ENCODE measurements at regions of chr1 and their contacts with region 1.

Region 1: GRCh38 chr1:18805925-18806849 is 53.3 kb downstream of the TAS1R2 start:
- DNase-seq: no peak
- H3K4me3 Mint-ChIP-seq: no peak overlapping the region
- H3K27ac Mint-ChIP-seq: no peak overlapping the region
- H3K4me1 Mint-ChIP-seq: no peaks in the 10 kb centered on the region
- H3K27me3 Mint-ChIP-seq: peaks cover 19% of the 10 kb centered on the region

Region 2: DNA sequence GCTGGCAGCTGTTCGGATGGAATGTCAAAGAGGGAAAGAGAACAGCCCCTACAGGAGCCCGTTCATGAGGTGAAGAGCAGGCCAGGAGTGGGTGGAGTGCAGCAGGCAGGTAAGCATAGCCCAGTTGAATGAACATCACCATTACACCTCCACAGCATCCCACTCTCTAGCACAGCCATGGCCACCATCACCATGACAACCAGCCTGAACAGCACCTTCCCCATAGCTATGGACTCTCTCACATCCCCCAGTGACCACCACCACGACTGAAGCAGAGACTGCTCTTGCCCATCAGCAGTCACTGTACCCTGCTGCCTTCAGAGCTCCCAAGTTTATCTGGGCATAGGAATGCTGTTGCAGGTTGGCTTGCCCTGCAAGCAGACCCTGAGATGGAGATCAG is 20.2 kb after region 1 on chr1:
- CTCF ChIA-PET with region 1: no interaction called
- POLR2A ChIA-PET with region 1: no interaction called
- intact Hi-C with region 1: no loop called
- DNase-seq: no peak
- H3K4me3 Mint-ChIP-seq: no peak overlapping the region
- H3K27ac Mint-ChIP-seq: no peak overlapping the region
- H3K4me1 Mint-ChIP-seq: no peaks in the 10 kb centered on the region
- H3K27me3 Mint-ChIP-seq: peaks cover 15% of the 10 kb centered on the region

Region 3: DNA sequence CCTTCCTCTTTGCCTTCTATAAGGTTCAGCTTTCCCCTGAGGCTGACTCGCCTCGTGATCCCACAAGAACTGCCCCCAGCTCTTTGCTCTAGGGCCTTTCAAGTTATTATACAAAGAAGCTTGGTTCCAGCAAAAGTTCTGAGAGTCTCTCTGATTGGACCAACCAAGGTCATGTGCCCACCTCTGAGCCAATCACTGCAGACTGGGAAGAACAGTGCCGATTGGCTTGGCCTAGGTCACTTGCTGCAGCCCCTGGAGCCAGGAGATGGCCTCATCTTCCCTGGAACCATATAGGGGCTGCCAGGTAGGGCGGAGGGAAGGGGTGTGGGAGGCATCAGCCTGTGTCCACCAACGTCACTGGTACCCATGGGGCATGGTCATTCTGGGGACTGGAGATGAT is 30.5 kb after region 1 on chr1:
- CTCF ChIA-PET with region 1: no interaction called
- POLR2A ChIA-PET with region 1: no interaction called
- intact Hi-C with region 1: loop called (anchors 2 kb)
- DNase-seq: no peak
- H3K4me3 Mint-ChIP-seq: no peak overlapping the region
- H3K27ac Mint-ChIP-seq: no peak overlapping the region
- H3K4me1 Mint-ChIP-seq: no peaks in the 10 kb centered on the region
- H3K27me3 Mint-ChIP-seq: peaks cover 22% of the 10 kb centered on the region